ENCODE measurements at regions of chr12 and their contacts with region 1.

Region 1: DNA sequence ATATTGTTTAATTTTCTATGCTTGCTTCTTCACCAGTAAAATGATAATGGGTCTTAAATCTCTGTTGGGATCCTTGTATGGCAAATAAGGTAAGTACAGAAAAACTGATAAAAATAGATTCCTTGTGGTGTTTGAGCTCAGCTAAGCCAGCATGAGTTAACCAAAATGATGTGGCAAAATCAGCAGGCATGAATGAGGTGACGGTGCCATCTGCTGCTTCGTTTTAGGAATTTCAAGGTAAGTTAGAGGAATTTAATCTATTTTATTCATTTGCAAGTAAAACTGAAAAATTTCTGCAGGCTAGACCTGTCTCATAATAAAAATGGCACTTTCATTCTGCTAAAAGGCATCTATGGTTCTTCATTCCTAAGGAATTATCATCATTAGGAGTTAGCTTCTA is 10.0 kb upstream of the CLEC7A start:
- DNase-seq: peak; percentile 44
- H3K4me3 ChIP-seq: no peak overlapping the region
- H3K27ac ChIP-seq: no peak overlapping the region
- H3K4me1 ChIP-seq: no peaks in the 10 kb centered on the region
- H3K27me3 ChIP-seq: no peaks in the 10 kb centered on the region
- CTCF ChIP-seq: peak; percentile 38 to 71

Region 2: GRCh38 chr12:9750276-9751203 is 389.5 kb before region 1 on chr12:
- CTCF ChIA-PET with region 1: no interaction called
- dilution Hi-C with region 1: no loop called
- in situ Hi-C with region 1: no loop called
- intact Hi-C with region 1: loop called (anchors 1 kb)
- DNase-seq: peak; percentile 30
- H3K4me3 ChIP-seq: no peak overlapping the region
- H3K27ac ChIP-seq: no peak overlapping the region
- H3K4me1 ChIP-seq: no peaks in the 10 kb centered on the region
- H3K27me3 ChIP-seq: no peaks in the 10 kb centered on the region
- CTCF ChIP-seq: peak; percentile 75 to 82

Region 3: GRCh38 chr12:9813821-9814809 is 325.9 kb before region 1 on chr12:
- CTCF ChIA-PET with region 1: no interaction called
- dilution Hi-C with region 1: no loop called
- in situ Hi-C with region 1: loop called in 1 of 2 experiments (anchors 25 kb)
- intact Hi-C with region 1: loop called (anchors 1 kb)
- DNase-seq: peak; percentile 55
- H3K4me3 ChIP-seq: peak overlapping the region; percentile 20 to 42 (median 39)
- H3K27ac ChIP-seq: no peak overlapping the region
- H3K4me1 ChIP-seq: peaks cover 5% of the 10 kb centered on the region
- H3K27me3 ChIP-seq: no peaks in the 10 kb centered on the region
- CTCF ChIP-seq: peak; percentile 92 to 99

Region 4: GRCh38 chr12:9925708-9926393 is 214.2 kb before region 1 on chr12:
- CTCF ChIA-PET with region 1: no interaction called
- dilution Hi-C with region 1: no loop called
- in situ Hi-C with region 1: no loop called
- intact Hi-C with region 1: loop called (anchors 5 kb)
- DNase-seq: peak; percentile 21
- H3K4me3 ChIP-seq: no peak overlapping the region
- H3K27ac ChIP-seq: no peak overlapping the region
- H3K4me1 ChIP-seq: no peaks in the 10 kb centered on the region
- H3K27me3 ChIP-seq: no peaks in the 10 kb centered on the region
- CTCF ChIP-seq: peak; percentile 15 to 58

Region 5: DNA sequence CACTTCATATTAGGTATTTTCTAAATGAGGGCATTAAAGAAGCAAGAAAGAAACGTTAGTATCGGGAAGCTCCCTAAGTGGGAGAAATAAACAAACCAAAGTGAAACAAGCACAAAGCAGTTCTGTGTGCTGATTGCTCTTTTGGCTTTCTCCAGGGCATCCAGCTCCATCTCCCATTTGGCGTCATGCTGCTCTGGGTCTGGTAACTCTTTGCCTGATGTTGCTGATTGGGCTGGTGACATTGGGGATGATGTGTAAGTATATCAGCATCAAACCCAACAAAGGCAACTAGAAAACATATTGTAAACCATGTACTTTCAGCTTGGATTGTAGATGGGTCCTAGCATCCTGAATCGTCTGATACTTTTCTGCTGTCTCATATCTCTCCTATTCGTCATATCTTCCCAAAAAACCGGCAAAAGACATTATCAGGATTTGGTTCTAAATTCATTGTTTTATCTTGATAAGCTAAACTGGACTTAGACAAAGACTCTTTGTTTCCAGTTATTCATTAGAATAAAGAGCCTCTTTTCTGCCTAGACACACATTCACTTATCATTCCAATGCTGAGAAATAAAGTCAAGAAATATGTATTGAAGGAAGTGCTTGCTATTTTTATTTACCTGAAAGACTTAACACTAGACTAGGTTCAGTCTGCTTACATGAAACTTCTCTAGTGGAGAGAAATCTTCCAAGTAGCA is 127.2 kb before region 1 on chr12:
- CTCF ChIA-PET with region 1: interaction called, 4 read pairs
- dilution Hi-C with region 1: no loop called
- in situ Hi-C with region 1: no loop called
- intact Hi-C with region 1: loop called (anchors 1 kb)
- DNase-seq: no peak
- H3K4me3 ChIP-seq: no peak overlapping the region
- H3K27ac ChIP-seq: no peak overlapping the region
- H3K4me1 ChIP-seq: peaks cover 6% of the 10 kb centered on the region
- H3K27me3 ChIP-seq: no peaks in the 10 kb centered on the region
- CTCF ChIP-seq: no peak

Region 6: DNA sequence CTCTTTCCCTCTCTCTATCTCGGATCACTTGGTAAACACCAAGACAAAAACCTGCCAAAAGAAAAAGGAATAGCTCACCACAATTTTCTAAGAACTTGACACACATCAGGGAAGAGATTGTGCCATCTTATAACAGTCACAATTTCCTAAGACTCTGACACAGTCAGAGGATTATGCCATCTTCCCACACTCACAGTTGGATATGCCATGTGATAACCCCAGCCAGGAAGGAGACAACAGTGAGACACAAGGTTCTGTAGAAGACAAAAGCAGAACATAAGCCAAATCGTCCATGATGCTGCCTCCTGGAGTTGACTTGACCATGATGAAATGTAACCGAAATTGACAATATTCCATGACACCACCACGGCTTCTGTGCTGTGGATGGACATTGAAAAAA is 112.3 kb before region 1 on chr12:
- CTCF ChIA-PET with region 1: no interaction called
- dilution Hi-C with region 1: no loop called
- in situ Hi-C with region 1: loop called in 1 of 2 experiments (anchors 5 kb)
- intact Hi-C with region 1: no loop called
- DNase-seq: peak; percentile 66
- H3K4me3 ChIP-seq: no peak overlapping the region
- H3K27ac ChIP-seq: peak overlapping the region; percentile 75
- H3K4me1 ChIP-seq: peaks cover 29% of the 10 kb centered on the region
- H3K27me3 ChIP-seq: no peaks in the 10 kb centered on the region
- CTCF ChIP-seq: no peak

Region 7: DNA sequence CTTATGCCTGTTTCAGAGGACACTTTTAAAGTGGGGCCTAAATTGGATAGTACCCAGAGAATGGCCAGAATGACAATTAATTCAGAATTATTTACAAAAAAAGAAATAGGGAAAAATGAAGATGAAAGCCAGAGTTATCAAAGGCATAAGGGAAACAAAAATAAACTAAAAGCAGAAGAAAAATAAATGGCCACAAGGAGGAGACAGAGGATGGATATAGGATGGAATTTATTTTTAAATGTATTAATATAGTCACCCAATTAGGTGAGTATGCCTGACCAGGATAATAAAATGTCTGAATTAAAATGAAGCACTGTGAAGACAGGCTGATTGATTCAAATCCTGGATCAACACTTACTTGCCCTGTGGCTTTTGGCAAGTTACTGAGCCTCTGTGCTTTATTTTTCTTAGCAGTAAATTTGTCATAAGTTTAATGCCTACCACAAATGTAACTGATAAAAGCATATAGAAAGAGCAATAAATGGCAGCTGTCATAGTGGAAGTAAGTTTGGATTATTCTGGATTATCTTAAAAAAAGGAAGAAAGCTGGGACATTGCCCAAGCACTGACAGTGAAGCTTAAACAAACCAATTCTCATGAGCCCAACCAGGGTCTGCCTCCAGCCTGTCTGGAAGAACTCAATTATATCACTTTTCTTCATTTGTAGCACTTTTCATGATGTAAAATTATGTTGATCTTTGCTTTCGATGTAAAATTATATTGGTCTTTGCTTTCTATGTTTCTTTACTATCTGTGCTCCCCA is 106.0 kb before region 1 on chr12:
- CTCF ChIA-PET with region 1: interaction called, 3 read pairs
- dilution Hi-C with region 1: no loop called
- in situ Hi-C with region 1: loop called (anchors 5 kb)
- intact Hi-C with region 1: loop called (anchors 1 kb)
- DNase-seq: peak; percentile 16
- H3K4me3 ChIP-seq: no peak overlapping the region
- H3K27ac ChIP-seq: no peak overlapping the region
- H3K4me1 ChIP-seq: peaks cover 21% of the 10 kb centered on the region
- H3K27me3 ChIP-seq: no peaks in the 10 kb centered on the region
- CTCF ChIP-seq: peak; percentile 35 to 56

Region 8: DNA sequence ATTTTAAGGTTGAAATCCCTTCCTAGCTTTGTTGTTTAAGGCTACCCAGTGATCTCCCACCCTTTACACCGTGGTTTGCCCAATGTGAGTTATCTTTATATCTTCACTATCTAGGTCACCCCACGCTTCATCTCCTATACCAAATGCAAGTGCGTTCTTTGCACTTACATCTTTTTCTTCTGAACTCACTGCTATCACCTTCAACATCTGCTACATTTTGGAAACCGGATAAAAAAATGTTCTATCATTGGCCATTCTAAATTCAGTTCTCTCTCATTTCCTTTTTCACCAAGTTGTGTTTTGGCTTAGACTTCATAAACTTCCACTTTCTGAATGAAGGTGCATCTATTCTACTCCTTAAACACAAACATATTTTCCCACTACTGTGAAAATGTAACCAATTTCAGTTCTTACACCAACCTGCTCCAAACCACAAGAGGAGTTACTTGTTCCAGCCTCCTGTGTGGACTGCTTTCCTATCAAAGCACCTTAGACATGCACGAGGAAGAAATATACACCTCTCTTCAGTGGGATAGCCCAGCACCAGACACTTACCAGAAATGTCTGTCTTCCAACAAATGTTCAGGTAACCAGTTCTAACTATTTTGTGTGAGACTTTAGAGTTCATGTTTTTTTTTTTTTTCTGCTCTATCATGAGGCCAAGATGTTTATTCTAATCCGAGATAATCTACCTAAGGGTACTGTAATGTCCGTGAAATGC is 87.6 kb before region 1 on chr12:
- CTCF ChIA-PET with region 1: no interaction called
- dilution Hi-C with region 1: no loop called
- in situ Hi-C with region 1: no loop called
- intact Hi-C with region 1: no loop called
- DNase-seq: no peak
- H3K4me3 ChIP-seq: no peak overlapping the region
- H3K27ac ChIP-seq: no peak overlapping the region
- H3K4me1 ChIP-seq: no peaks in the 10 kb centered on the region
- H3K27me3 ChIP-seq: peaks cover 5% of the 10 kb centered on the region
- CTCF ChIP-seq: no peak

Region 9: GRCh38 chr12:10838461-10838860 is 698.5 kb after region 1 on chr12:
- CTCF ChIA-PET with region 1: no interaction called
- dilution Hi-C with region 1: no loop called
- in situ Hi-C with region 1: no loop called
- intact Hi-C with region 1: no loop called
- DNase-seq: no peak
- H3K4me3 ChIP-seq: no peak overlapping the region
- H3K27ac ChIP-seq: no peak overlapping the region
- H3K4me1 ChIP-seq: no peaks in the 10 kb centered on the region
- H3K27me3 ChIP-seq: no peaks in the 10 kb centered on the region
- CTCF ChIP-seq: no peak

Measured in mammary epithelial cell (primary cell).